SK-N-SH (cell line): ENCODE measurements at regions of chr19 and their contacts with region 1.

Region 1: DNA sequence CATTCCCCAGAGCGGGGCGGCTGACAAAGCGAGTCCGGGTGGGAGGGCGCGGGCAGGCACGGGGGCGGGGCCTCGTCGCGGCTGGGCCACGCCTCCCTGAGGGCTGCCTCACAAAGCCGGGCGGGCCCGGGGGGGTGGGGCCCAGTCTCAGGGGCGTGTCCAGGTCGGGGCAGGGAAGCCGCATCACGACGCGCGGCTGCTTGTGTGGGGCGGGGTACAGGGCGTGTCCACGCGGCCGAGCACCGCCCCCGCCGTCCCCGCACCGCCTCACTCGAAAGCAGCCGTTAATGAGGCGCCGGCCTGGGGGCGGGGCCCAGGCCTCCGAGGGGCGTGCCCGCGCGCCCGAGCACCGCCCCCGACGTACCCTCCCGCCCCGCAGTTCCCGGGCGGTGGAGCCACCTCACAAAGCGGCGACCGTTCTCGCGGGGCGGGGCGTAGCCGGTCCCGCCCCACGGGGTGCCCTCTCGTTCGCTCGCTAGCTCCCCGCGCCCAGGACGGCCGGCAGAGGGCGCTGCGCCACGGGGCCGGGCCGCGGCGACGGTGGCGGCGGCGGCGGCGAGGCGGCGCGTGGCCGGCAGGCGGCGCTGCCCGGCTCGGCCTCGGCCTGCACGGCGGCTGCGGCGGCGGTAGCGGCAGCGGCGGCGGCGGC is at the start of gene CARM1:
- DNase-seq: peak; percentile 100
- H3K4me3 ChIP-seq: peak within 1 kb of the TSS; percentile 67 to 93
- H3K27ac ChIP-seq: peak within 1 kb of the TSS; percentile 62 to 84
- H3K4me1 ChIP-seq: peaks cover 8 to 10% of the 10 kb centered on the region in 2 experiments; a peak in 1 of 4 replicates
- H3K27me3 ChIP-seq: no peaks in the 10 kb centered on the region
- CTCF ChIP-seq: peak; percentile 39; the same call in 1 of the 2 replicates
- EP300 ChIP-seq: no peak
- RAD21 ChIP-seq: peak; percentile 60
- polyA plus RNA-seq, gene CARM1: 38.2 and 62.2 TPM in 2 replicates

Region 2: DNA sequence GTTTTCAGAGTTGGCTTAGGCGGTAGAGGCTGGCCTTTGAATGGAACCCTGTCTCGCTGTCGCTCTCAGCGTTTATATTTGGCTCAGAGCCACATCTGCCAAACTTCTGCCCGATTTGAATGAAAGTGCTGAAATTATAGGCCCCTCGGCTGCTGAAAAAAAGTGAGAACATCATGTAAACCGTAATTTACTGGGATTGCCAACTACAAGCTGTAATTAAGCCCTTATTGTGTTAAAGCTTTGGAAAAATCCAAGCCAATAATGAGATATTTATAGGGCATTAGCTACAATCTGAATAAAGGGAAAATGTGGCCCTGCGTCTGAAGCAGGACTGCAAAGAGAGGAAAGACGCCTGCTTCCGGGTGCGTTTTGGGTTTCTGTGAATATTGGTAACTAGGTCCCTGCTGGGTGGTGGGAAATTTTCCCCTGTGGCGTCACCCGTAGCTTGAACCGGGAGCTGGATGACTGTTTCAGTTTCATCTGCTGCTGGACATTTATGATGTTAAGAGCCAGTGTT is 143.3 kb before region 1 on chr19:
- CTCF ChIA-PET with region 1: no interaction called
- POLR2A ChIA-PET with region 1: no interaction called
- DNase-seq: no peak
- H3K4me3 ChIP-seq: no peak overlapping the region
- H3K27ac ChIP-seq: no peak overlapping the region
- H3K4me1 ChIP-seq: peaks cover 0 to 8% of the 10 kb centered on the region in 2 experiments; a peak in 1 of 4 replicates
- H3K27me3 ChIP-seq: no peaks in the 10 kb centered on the region
- CTCF ChIP-seq: no peak
- EP300 ChIP-seq: no peak
- RAD21 ChIP-seq: no peak

Region 3: DNA sequence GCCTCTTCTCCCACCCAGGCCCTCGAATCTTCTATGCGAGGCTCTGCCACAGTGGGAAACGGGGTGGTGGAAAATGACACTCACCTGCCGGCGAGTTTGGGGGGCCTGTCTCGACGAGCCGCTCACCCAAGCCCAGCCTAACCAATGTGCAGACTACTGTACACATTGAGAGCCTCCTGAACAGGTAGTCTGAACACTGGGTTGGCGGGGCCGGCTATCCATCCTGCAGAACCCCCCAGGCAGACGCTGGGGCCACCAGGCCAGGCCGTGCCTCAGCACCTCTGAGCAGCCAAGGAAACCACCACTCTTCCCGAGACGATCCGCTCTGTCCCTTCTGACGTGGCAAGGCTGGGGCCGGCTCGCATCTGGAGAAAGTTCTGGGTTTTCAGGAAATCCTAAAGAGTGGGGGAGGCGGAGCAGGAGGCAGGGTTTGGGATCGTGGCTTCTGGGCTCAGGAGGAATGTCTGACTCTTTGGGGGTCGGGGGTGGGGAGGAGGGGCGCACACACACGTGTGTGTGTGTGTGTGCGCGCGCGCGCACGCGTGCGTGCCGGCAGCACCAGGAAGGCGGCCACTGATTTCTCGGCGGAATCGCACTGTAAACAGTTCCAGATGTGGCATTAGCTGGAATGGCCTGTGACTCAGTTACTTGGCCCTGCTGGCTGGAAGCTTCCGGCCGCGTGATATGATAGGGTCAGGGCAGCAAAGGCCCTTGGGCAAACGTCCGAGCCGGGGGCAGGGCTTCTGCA is 53.6 kb before region 1 on chr19:
- CTCF ChIA-PET with region 1: no interaction called
- POLR2A ChIA-PET with region 1: no interaction called
- DNase-seq: peak; percentile 88
- H3K4me3 ChIP-seq: peak overlapping the region; percentile 33 to 51
- H3K27ac ChIP-seq: peak overlapping the region; percentile 91
- H3K4me1 ChIP-seq: peaks cover 37 to 56% of the 10 kb centered on the region in 2 experiments; a peak in 3 of 4 replicates
- H3K27me3 ChIP-seq: no peaks in the 10 kb centered on the region
- CTCF ChIP-seq: no peak
- EP300 ChIP-seq: peak; percentile 17 to 69; a peak in 2 of 4 replicates
- RAD21 ChIP-seq: no peak

Region 4: DNA sequence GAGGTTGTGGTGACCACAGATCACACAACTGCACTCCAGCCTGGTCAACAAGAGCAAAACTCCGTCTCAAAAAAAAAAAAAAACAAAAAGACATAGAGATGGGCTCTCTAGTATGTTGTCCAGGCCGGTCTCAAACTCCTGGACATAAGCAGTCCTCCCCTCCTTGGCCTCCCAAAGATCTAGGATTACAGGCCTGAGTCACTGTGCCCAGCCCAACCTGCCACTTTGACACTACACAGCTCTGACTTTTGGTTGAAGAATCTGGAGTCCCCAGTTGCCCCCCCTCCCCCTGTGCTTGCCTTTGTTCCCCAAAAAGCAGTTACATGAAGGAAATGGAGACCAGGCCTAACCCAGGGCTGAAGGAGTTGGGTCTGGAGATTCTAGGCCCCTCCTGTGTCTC is 13.2 kb after region 1 on chr19:
- CTCF ChIA-PET with region 1: interaction called, 49 read pairs
- POLR2A ChIA-PET with region 1: interaction called, 4 read pairs
- DNase-seq: no peak
- H3K4me3 ChIP-seq: no peak overlapping the region
- H3K27ac ChIP-seq: peak overlapping the region in 1 of 2 experiments; percentile 69; a peak in 2 of 4 replicates
- H3K4me1 ChIP-seq: peaks cover 9 to 42% of the 10 kb centered on the region in 2 experiments; a peak in 2 of 4 replicates
- H3K27me3 ChIP-seq: no peaks in the 10 kb centered on the region
- CTCF ChIP-seq: no peak
- EP300 ChIP-seq: peak in 1 of 2 experiments; percentile 42; a peak in 1 of 4 replicates
- RAD21 ChIP-seq: no peak

Region 5: GRCh38 chr19:10915130-10916091 is 44.3 kb after region 1 on chr19:
- CTCF ChIA-PET with region 1: interaction called, 12 read pairs
- POLR2A ChIA-PET with region 1: interaction called, 3 read pairs
- DNase-seq: peak; percentile 68
- H3K4me3 ChIP-seq: no peak overlapping the region
- H3K27ac ChIP-seq: peak overlapping the region; percentile 43 to 74; a peak in 3 of 4 replicates
- H3K4me1 ChIP-seq: peaks cover 4 to 17% of the 10 kb centered on the region in 2 experiments; a peak in 3 of 4 replicates
- H3K27me3 ChIP-seq: no peaks in the 10 kb centered on the region
- CTCF ChIP-seq: no peak
- EP300 ChIP-seq: peak in 1 of 2 experiments; percentile 38; a peak in 2 of 4 replicates
- RAD21 ChIP-seq: no peak

Region 6: DNA sequence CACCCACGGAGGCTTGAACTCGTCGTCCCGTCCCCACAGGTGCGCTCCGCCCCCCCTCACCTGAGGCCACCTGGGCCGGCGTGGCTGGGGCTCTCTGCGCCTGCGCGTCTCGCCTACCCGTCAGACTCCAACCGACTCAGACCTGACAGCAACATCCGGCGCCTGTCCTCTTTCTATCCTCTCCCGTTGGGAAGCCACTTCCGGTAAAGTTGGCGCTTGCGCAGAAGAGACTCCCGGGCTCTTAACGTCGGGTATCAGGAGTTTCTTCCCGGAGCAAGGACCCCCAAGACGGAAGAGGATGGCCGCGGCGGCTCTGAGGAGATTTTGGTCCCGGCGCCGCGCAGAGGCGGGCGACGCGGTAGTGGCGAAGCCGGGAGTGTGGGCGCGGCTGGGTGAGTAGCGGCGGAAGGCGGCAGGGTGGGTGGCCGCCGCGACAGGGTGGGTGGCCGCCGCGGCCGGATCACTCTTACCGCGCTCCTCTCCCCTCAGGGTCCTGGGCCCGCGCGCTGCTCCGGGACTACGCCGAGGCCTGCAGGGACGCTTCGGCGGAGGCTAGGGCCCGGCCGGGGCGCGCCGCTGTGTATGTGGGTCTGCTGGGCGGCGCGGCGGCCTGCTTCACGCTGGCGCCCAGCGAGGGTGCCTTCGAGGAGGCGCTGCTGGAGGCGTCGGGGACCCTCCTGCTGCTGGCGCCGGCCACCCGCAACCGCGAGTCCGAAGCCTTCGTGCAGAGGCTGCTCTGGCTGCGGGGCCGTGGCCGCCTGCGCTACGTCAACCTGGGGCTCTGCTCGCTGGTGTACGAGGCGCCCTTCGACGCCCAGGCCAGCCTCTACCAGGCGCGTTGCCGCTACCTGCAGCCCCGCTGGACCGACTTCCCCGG is 57.7 kb after region 1 on chr19 and contains the starts of genes TIMM29 and YIPF2:
- CTCF ChIA-PET with region 1: interaction called, 16 read pairs
- POLR2A ChIA-PET with region 1: no interaction called
- DNase-seq: peak; percentile 98
- H3K4me3 ChIP-seq: peak within 1 kb of the TSS; percentile 74 to 89
- H3K27ac ChIP-seq: peak within 1 kb of the TSS; percentile 36 to 45; a peak in 2 of 4 replicates
- H3K4me1 ChIP-seq: peaks cover 4 to 15% of the 10 kb centered on the region in 2 experiments; a peak in 1 of 4 replicates
- H3K27me3 ChIP-seq: no peaks in the 10 kb centered on the region
- CTCF ChIP-seq: no peak
- EP300 ChIP-seq: peak in 1 of 2 experiments; percentile 9; a peak in 1 of 4 replicates
- RAD21 ChIP-seq: no peak
- polyA plus RNA-seq, gene TIMM29: 11.7 and 12.5 TPM in 2 replicates
- polyA plus RNA-seq, gene YIPF2: 61.3 and 62.5 TPM in 2 replicates